ENCODE measurements at regions of chr22 and their contacts with region 1.

Region 1: DNA sequence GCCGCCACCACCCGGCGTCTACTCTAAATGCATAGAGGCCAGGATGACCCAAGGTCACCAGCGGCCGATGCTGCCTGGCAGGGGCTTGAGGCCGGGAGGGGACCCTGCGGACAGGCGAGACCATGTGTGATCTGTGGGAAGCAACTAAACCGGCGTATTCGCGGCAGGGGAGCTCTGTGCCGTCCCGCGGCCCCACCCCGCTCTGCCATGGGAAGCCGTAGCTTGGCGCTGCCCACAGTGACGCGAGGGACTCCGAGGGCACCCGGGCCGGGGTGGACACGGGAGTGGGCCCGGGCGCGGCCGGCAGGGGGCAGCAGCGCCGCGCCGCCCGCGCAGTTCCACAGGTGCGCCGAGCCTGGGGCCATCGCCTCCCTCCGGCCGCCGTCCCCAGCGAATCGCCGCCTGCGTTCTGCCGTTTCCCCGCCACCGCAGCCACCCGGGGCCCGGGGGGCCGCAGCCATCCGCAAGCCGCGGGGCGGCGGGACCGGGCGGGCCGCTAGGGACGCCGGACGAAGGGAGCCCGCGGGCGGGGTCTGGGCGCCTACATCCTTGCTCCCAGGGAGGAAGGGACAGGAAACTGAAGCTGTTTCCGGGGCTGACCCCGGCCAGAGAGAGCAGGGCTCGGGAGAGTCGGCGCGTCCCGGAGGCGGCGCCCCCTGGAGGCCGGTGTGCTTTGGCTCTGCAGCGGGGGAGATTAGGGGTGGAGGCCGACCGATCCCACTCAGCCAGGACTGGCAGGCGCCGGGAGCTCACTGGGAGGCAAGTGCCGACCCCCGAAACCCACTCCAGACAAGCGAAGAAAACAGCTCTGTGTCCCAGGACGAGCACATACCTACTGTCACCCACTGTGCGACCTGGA is 12.5 kb upstream of the HDHD5 start:
- DNase-seq: peak; percentile 89
- H3K4me3 Mint-ChIP-seq: peak overlapping the region; percentile 80
- H3K27ac Mint-ChIP-seq: peak overlapping the region; percentile 56
- H3K4me1 Mint-ChIP-seq: peaks cover 7% of the 10 kb centered on the region
- H3K27me3 Mint-ChIP-seq: no peaks in the 10 kb centered on the region

Region 2: DNA sequence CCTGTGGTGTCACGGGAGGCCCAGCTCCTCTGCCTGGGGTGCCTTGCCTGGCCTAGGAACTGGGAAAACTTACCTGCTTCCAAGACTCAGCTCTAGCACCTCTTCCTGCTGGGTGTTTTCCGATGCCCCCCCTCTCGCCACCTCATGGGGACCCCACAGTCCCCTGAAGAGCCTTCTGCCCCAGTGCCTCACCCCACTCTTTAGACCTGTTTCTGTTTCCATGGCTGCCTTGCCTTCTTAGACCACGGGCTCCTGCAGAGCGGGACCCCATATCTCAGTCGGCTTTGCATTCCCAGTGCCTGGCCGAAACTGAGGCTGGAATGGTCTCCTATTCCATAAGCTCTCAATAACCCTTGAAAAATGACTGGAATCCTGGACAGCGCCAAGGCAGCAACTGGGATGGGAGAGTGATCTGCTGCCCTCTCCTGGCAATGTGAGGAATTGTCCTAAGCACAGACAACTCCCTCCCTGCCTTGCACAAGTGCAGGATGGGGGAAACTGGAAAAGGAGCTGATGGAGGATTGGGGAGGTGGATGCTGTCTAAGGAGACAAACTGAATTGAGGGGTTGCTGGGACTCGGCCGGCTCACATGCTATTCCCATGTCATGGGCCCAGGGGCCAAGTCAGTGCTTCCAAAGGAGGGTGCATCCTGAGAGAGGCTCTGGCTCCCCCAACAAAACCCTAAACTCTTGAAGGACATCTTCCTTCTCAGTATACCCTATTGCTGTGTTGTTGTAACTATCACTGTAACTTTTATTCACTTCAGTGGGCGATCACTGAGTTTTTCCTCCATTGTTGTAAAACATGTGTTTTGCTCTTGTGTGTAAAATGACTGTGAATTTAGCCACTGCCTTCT is 113.4 kb before region 1 on chr22:
- CTCF ChIA-PET with region 1: interaction called, 12 read pairs
- POLR2A ChIA-PET with region 1: no interaction called
- intact Hi-C with region 1: no loop called
- DNase-seq: peak; percentile 60
- H3K4me3 Mint-ChIP-seq: no peak overlapping the region
- H3K27ac Mint-ChIP-seq: no peak overlapping the region
- H3K4me1 Mint-ChIP-seq: peaks cover 2% of the 10 kb centered on the region
- H3K27me3 Mint-ChIP-seq: peaks cover 9% of the 10 kb centered on the region

Region 3: GRCh38 chr22:17091851-17092250 is 79.7 kb before region 1 on chr22:
- CTCF ChIA-PET with region 1: interaction called, 18 read pairs
- POLR2A ChIA-PET with region 1: interaction called, 6 read pairs
- intact Hi-C with region 1: no loop called
- DNase-seq: no peak
- H3K4me3 Mint-ChIP-seq: no peak overlapping the region
- H3K27ac Mint-ChIP-seq: no peak overlapping the region
- H3K4me1 Mint-ChIP-seq: peaks cover 60% of the 10 kb centered on the region
- H3K27me3 Mint-ChIP-seq: no peaks in the 10 kb centered on the region

Region 4: GRCh38 chr22:17149076-17149810 is 22.3 kb before region 1 on chr22:
- CTCF ChIA-PET with region 1: interaction called, 16 read pairs
- POLR2A ChIA-PET with region 1: no interaction called
- intact Hi-C with region 1: no loop called
- DNase-seq: no peak
- H3K4me3 Mint-ChIP-seq: no peak overlapping the region
- H3K27ac Mint-ChIP-seq: no peak overlapping the region
- H3K4me1 Mint-ChIP-seq: peaks cover 4% of the 10 kb centered on the region
- H3K27me3 Mint-ChIP-seq: no peaks in the 10 kb centered on the region

Region 5: DNA sequence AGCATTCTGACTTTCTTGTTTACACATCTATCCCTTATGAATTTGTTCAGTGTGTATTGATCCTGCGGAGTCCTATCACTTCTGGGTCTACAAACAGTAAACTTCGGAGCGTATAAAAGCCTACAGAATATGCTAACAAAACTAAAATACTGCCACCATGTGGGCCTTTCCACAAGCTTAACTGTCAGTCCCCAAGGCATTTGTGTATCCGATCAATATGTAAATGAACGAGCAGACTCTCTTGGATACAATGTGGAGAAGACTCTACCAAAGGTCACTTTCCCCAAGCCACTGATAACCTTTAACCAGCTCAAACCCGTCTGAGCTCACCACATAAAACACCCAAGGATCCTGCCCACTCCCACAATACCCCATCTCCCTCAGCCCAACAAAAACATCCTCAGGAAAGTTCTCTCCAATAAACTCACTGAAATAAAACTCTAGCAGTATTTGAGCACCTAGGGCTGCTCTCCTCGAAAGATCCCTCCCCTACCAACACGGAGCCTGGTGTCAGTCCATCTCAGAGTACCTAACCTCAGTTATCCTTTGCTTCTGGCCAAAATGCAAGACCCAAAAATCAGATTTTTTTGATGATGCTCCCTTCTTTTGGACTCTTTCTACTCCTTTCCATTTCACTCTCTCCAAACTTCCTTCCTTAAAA is 29.9 kb after region 1 on chr22:
- CTCF ChIA-PET with region 1: interaction called, 13 read pairs
- POLR2A ChIA-PET with region 1: no interaction called
- intact Hi-C with region 1: no loop called
- DNase-seq: no peak
- H3K4me3 Mint-ChIP-seq: no peak overlapping the region
- H3K27ac Mint-ChIP-seq: no peak overlapping the region
- H3K4me1 Mint-ChIP-seq: no peaks in the 10 kb centered on the region
- H3K27me3 Mint-ChIP-seq: no peaks in the 10 kb centered on the region

Region 6: GRCh38 chr22:17501679-17502285 is 330.2 kb after region 1 on chr22:
- CTCF ChIA-PET with region 1: interaction called, 91 read pairs
- POLR2A ChIA-PET with region 1: interaction called, 6 read pairs
- intact Hi-C with region 1: loop called (anchors 1 kb)
- DNase-seq: no peak
- H3K4me3 Mint-ChIP-seq: no peak overlapping the region
- H3K27ac Mint-ChIP-seq: no peak overlapping the region
- H3K4me1 Mint-ChIP-seq: no peaks in the 10 kb centered on the region
- H3K27me3 Mint-ChIP-seq: peaks cover 6% of the 10 kb centered on the region

Measured in activated CD4-positive, alpha-beta memory T cell treated with anti-CD3 and anti-CD28 coated beads for 36 hours (primary cell).